Caco-2 (cell line): ENCODE measurements at regions of chr21 and their contacts with region 1.

Region 1: GRCh38 chr21:32770871-32771523 is 558 bp downstream of the PAXBP1 start:
- DNase-seq: peak; percentile 62 to 67
- H3K4me3 ChIP-seq: peak overlapping the region; percentile 85
- H3K4me3 Mint-ChIP-seq: peak overlapping the region; percentile 91
- H3K27ac Mint-ChIP-seq: peak overlapping the region; percentile 90
- H3K4me1 ChIP-seq: 0 out of 2 replicates have a peak, but pooled peaks cover 9% of the 10 kb centered on the region
- H3K4me1 Mint-ChIP-seq: peaks cover 8% of the 10 kb centered on the region
- H3K27me3 ChIP-seq: no peaks in the 10 kb centered on the region
- H3K27me3 Mint-ChIP-seq: no peaks in the 10 kb centered on the region
- CTCF ChIP-seq: peak in 1 of 2 experiments; percentile 18

Region 2: DNA sequence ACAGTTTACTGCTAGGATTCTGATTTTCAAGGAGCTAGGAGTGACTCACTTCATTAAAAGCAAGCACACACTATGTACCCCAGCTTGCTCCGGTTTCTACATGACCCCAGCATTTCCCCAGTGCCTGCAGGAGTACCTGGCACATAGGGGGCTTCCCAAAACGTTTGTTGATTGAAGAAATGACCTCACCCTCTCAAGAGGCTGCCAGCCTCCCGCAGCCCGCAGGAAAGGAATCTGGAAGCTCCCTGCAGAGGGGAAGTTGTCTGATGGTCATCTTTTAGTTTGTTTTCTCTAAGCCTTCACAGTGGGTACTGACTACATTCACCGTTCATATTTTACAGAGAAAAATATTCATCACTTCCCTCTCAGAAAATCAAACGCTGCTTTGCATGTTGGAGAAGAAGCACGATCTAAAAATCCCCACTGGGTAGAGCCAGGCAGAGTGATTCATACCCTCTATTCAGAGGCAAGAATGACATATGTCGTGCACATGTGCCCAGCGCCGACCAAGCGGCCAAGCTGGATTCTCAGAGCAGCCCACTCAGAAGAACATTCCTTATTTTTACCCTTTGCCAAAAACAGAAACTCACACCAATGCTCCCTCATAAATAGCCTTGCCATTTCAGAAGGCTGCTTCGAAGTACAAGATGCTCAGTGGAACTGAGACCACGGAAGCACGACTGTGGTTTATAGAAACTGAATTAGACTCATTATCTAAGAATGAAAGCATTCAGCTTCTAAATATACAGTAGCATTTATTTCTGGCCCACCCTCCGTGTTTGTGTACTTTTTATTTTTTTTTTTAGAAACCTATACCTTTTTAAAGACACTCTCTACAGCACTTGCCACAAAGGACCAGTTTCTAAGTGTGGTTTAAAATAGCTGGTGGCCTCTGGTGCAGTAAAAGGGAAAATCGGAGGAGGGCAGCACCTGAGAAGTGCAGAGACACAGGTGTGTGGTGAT is 635.3 kb before region 1 on chr21:
- CTCF ChIA-PET with region 1: no interaction called
- POLR2A ChIA-PET with region 1: no interaction called
- intact Hi-C with region 1: no loop called
- DNase-seq: no peak
- H3K4me3 ChIP-seq: no peak overlapping the region
- H3K4me3 Mint-ChIP-seq: no peak overlapping the region
- H3K27ac Mint-ChIP-seq: no peak overlapping the region
- H3K4me1 ChIP-seq: no peaks in the 10 kb centered on the region
- H3K4me1 Mint-ChIP-seq: peaks cover 7% of the 10 kb centered on the region
- H3K27me3 ChIP-seq: no peaks in the 10 kb centered on the region
- H3K27me3 Mint-ChIP-seq: peaks cover 16% of the 10 kb centered on the region
- CTCF ChIP-seq: no peak

Region 3: GRCh38 chr21:32727687-32728455 is 43.1 kb before region 1 on chr21 and contains the start of gene SYNJ1:
- CTCF ChIA-PET with region 1: interaction called, 6 read pairs
- POLR2A ChIA-PET with region 1: interaction called, 7 read pairs
- intact Hi-C with region 1: loop called (anchors 1 kb)
- DNase-seq: peak; percentile 95
- H3K4me3 ChIP-seq: peak within 1 kb of the TSS; percentile 97
- H3K4me3 Mint-ChIP-seq: peak within 1 kb of the TSS; percentile 99
- H3K27ac Mint-ChIP-seq: peak within 1 kb of the TSS; percentile 91
- H3K4me1 ChIP-seq: peaks cover 4% of the 10 kb centered on the region; the same call in 1 of the 2 replicates
- H3K4me1 Mint-ChIP-seq: peaks cover 6% of the 10 kb centered on the region
- H3K27me3 ChIP-seq: no peaks in the 10 kb centered on the region
- H3K27me3 Mint-ChIP-seq: no peaks in the 10 kb centered on the region
- CTCF ChIP-seq: no peak
- total RNA-seq, gene SYNJ1: 8.3 and 11.5 TPM in 2 replicates

Region 4: GRCh38 chr21:32817208-32817607 is 46.2 kb after region 1 on chr21:
- CTCF ChIA-PET with region 1: interaction called, 8 read pairs
- POLR2A ChIA-PET with region 1: no interaction called
- intact Hi-C with region 1: loop called (anchors 1 kb)
- DNase-seq: peak; percentile 55 to 72
- H3K4me3 ChIP-seq: no peak overlapping the region
- H3K4me3 Mint-ChIP-seq: peak overlapping the region; percentile 7
- H3K27ac Mint-ChIP-seq: peak overlapping the region; percentile 34
- H3K4me1 ChIP-seq: peaks cover 20% of the 10 kb centered on the region
- H3K4me1 Mint-ChIP-seq: peaks cover 18% of the 10 kb centered on the region
- H3K27me3 ChIP-seq: no peaks in the 10 kb centered on the region
- H3K27me3 Mint-ChIP-seq: no peaks in the 10 kb centered on the region
- CTCF ChIP-seq: no peak

Region 5: GRCh38 chr21:33229784-33230544 is 459.0 kb after region 1 on chr21 and contains the start of gene IFNAR2:
- CTCF ChIA-PET with region 1: no interaction called
- POLR2A ChIA-PET with region 1: interaction called, 10 read pairs
- intact Hi-C with region 1: no loop called
- DNase-seq: peak; percentile 84
- H3K4me3 ChIP-seq: peak within 1 kb of the TSS; percentile 93
- H3K4me3 Mint-ChIP-seq: peak within 1 kb of the TSS; percentile 87
- H3K27ac Mint-ChIP-seq: peak within 1 kb of the TSS; percentile 64
- H3K4me1 ChIP-seq: peaks cover 62% of the 10 kb centered on the region
- H3K4me1 Mint-ChIP-seq: peaks cover 55% of the 10 kb centered on the region
- H3K27me3 ChIP-seq: no peaks in the 10 kb centered on the region
- H3K27me3 Mint-ChIP-seq: no peaks in the 10 kb centered on the region
- CTCF ChIP-seq: no peak
- total RNA-seq, gene IFNAR2: 33.7 and 36.1 TPM in 2 replicates